Upper lobe of right lung (tissue), 1 donor: ENCODE measurements at regions of chr1 and their contacts with region 1.

Region 1: DNA sequence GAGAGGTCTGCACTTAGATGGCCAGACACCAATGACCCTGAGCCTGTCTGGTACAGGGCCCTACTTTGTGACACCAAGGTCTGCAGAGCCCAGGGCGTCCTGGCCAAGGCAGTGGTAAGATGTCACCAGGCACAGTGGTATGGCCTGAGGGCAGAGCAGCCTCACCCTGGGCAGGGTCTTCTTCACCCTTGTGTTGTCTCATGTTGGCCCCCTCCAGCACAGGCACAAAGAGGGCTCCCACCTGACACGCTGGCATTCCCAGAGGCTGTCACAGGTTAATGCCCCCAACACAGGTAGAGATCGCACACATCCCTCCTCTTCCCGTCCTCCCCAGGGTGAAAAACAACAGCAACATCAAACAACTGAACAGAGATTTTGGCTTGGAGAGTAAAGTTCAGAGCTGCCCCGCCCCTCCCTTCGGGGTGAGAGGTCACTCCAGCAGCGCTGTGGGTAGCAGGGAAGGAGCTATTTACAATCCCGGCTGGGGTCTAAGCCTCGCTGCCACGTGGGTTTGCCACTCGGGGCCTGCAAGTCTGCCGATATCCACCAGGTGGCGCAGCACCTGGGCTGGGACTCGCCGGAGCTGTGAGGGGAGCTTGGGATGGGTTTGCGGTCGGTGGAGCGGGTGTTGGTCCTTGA is 12.6 kb downstream of the EFNA3 start:
- DNase-seq: peak; percentile 89
- ATAC-seq: peak; percentile 84
- H3K4me3 ChIP-seq: no peak overlapping the region
- H3K27ac ChIP-seq: no peak overlapping the region
- H3K4me1 ChIP-seq: peaks cover 12% of the 10 kb centered on the region
- H3K27me3 ChIP-seq: no peaks in the 10 kb centered on the region
- CTCF ChIP-seq: peak; percentile 99

Region 2: GRCh38 chr1:154663471-154664060 is 427.6 kb before region 1 on chr1:
- intact Hi-C with region 1: no loop called
- DNase-seq: no peak
- ATAC-seq: no peak
- H3K4me3 ChIP-seq: no peak overlapping the region
- H3K27ac ChIP-seq: no peak overlapping the region
- H3K4me1 ChIP-seq: no peaks in the 10 kb centered on the region
- H3K27me3 ChIP-seq: peaks cover 13% of the 10 kb centered on the region
- CTCF ChIP-seq: no peak

Region 3: DNA sequence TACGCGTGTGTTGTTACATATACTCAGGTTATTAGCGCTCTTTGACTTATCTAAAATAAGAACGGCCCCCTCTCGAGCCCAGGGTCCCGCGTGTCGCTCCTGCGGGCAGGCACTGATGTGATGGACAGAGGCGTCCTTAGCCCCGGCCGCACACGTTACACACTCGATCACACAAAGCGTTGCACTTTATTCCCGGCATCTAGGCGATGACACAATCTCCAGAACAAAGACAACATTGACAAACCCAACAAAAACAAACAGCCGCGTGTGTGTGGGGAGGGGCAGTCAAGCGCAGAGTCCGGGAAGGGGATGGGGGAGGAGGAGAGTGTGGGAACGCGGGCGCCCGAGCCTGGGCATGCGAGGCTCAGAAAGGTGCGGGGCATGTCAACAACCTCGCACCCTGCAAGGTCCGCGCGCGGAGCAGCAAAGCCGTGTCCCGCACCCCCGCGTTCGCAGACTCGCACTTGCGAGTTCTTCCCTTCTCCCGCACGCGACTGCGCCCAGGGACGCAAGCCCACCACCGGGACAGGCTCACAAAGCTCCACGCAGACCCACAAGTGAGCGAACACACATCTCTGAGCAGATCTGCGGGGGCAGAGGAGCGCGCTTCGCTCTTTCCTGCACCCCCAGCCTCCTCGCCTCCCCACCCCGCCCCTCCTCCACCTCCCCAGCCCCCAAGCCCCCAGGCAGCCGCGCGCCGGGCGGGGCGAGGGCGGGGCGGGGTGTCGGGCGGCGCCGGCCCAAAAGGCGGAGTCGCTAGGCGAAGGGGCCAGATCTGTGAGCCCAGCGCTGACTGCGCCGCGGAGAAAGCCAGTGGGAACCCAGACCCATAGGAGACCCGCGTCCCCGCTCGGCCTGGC is 36.1 kb after region 1 on chr1 and contains the start of gene EFNA1:
- intact Hi-C with region 1: loop called (anchors 5 kb)
- DNase-seq: peak; percentile 91
- ATAC-seq: peak; percentile 66
- H3K4me3 ChIP-seq: peak within 1 kb of the TSS; percentile 64
- H3K27ac ChIP-seq: peak within 1 kb of the TSS; percentile 87
- H3K4me1 ChIP-seq: peaks cover 33% of the 10 kb centered on the region
- H3K27me3 ChIP-seq: peaks cover 10% of the 10 kb centered on the region
- CTCF ChIP-seq: no peak
- total RNA-seq, gene EFNA1: 178 TPM

Region 4: GRCh38 chr1:155167166-155168104 is 76.2 kb after region 1 on chr1:
- intact Hi-C with region 1: loop called (anchors 5 kb)
- DNase-seq: peak; percentile 93
- ATAC-seq: peak; percentile 92
- H3K4me3 ChIP-seq: peak overlapping the region; percentile 11
- H3K27ac ChIP-seq: peak overlapping the region; percentile 75
- H3K4me1 ChIP-seq: peaks cover 21% of the 10 kb centered on the region
- H3K27me3 ChIP-seq: no peaks in the 10 kb centered on the region
- CTCF ChIP-seq: peak; percentile 86